Natural killer cell (primary cell): ENCODE measurements at regions of chr10 and their contacts with region 1.

Region 1: DNA sequence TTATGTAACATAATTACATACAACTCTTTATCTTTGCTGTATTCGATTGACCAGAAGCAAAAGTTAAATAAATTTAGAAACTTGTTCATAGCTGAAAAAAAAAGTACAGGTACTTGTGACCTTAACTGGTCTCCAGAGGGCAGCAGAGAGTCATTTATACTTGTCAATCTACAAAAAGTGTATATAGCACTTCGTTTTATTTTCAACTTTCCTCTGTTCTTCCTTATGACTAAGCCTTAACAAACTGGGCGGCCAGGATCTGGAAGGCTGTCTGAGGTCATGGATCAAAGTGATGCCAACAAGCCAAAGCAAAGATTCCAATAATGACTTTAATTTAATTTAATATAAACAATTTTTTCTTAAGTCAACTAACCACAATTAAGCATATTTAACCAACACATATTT is 29.8 kb downstream of the C10orf67 start:
- DNase-seq: peak in 1 of 2 donors; percentile 85
- ATAC-seq: peak in 2 of 3 donors; percentile 48 to 54
- H3K4me3 ChIP-seq: no peak overlapping the region
- H3K4me3 Mint-ChIP-seq: no peak overlapping the region
- H3K27ac ChIP-seq: no peak overlapping the region
- H3K27ac Mint-ChIP-seq: no peak overlapping the region
- H3K4me1 ChIP-seq: no peaks in the 10 kb centered on the region
- H3K4me1 Mint-ChIP-seq: no peaks in the 10 kb centered on the region
- H3K27me3 ChIP-seq: no peaks in the 10 kb centered on the region
- H3K27me3 Mint-ChIP-seq: peaks cover 0 to 13% of the 10 kb centered on the region in 2 donors
- CTCF ChIP-seq: peak; percentile 87

Region 2: DNA sequence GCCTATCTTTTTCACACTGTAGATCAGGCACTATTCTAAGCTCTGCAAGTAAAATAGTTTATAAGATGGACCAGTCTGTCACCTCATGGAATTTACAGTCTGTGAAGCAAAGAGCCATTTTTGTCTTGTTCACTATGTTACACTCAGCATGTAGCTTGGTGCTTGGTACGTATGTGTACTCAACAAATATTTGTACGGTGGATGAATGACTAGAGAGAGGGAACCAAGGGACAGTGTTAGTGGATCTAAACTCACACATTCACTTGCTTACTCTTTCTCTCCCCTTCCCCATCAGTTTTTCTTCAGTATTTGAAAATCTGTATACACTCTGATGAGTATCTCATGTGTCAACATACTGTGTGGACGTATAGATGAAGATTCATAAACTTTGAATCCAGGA is 76.8 kb before region 1 on chr10:
- intact Hi-C with region 1: no loop called
- DNase-seq: no peak
- ATAC-seq: peak in 1 of 3 donors; percentile 39
- H3K4me3 ChIP-seq: no peak overlapping the region
- H3K4me3 Mint-ChIP-seq: no peak overlapping the region
- H3K27ac ChIP-seq: no peak overlapping the region
- H3K27ac Mint-ChIP-seq: no peak overlapping the region
- H3K4me1 ChIP-seq: no peaks in the 10 kb centered on the region
- H3K4me1 Mint-ChIP-seq: no peaks in the 10 kb centered on the region
- H3K27me3 ChIP-seq: no peaks in the 10 kb centered on the region
- H3K27me3 Mint-ChIP-seq: peaks cover 0 to 3% of the 10 kb centered on the region in 2 donors
- CTCF ChIP-seq: no peak

Region 3: DNA sequence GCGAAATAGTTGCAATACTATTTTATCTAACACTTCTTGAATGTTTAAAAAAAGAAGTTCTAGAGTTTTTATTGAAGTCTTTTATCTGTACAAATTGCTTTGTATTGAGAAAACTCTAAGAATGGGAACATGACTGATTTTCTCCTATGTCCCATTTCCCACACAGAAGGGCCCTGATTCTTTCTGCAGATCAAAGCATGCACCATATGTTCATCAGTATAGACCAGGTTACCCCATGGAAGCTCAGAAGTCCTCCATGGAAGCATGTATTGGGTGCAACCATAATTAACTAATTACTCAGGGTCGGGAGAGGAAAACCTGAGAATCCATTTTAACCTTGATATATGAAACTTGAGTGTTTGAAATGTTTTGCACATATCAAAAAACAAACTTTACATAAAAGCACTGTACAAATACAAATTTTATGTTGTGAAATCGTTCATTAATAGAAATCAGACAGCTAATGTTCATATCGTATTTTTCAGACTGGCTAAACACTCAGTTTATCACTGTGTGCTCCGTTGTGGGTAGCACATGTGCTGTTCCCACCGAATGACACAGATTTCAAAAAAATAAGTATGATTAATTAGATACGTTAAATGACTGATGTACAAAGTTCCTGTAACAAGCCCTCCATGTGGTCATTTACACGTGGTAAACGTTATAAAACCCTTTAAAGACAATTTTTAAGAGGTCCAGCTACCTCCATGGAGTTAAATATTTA is 51.2 kb before region 1 on chr10:
- intact Hi-C with region 1: no loop called
- DNase-seq: no peak
- ATAC-seq: no peak
- H3K4me3 ChIP-seq: no peak overlapping the region
- H3K4me3 Mint-ChIP-seq: no peak overlapping the region
- H3K27ac ChIP-seq: no peak overlapping the region
- H3K27ac Mint-ChIP-seq: no peak overlapping the region
- H3K4me1 ChIP-seq: no peaks in the 10 kb centered on the region
- H3K4me1 Mint-ChIP-seq: no peaks in the 10 kb centered on the region
- H3K27me3 ChIP-seq: no peaks in the 10 kb centered on the region
- H3K27me3 Mint-ChIP-seq: no peaks in the 10 kb centered on the region
- CTCF ChIP-seq: no peak

Region 4: DNA sequence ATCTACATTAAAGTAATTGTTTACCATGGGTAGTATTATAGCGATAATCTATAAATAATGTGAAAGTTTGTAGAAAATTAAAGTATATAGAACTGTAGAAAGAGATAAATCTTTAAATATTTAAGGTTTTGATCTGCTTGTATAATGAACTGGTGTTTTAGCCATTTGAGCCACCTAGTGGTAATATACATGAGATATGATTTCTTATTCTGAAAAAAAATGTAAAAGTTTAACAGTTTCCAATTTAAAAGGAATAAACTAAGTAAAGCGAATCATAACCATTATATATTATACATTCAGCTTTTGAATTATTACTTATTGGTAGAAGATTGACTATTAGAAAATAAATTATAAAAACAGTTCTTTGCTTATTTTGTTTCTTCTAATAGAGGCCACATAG is 215.2 kb after region 1 on chr10:
- intact Hi-C with region 1: loop called (anchors 2 kb)
- DNase-seq: peak in 1 of 2 donors; percentile 30
- ATAC-seq: no peak
- H3K4me3 ChIP-seq: no peak overlapping the region
- H3K4me3 Mint-ChIP-seq: no peak overlapping the region
- H3K27ac ChIP-seq: no peak overlapping the region
- H3K27ac Mint-ChIP-seq: no peak overlapping the region
- H3K4me1 ChIP-seq: no peaks in the 10 kb centered on the region
- H3K4me1 Mint-ChIP-seq: no peaks in the 10 kb centered on the region
- H3K27me3 ChIP-seq: no peaks in the 10 kb centered on the region
- H3K27me3 Mint-ChIP-seq: peaks cover 0 to 6% of the 10 kb centered on the region in 2 donors
- CTCF ChIP-seq: no peak

Region 5: DNA sequence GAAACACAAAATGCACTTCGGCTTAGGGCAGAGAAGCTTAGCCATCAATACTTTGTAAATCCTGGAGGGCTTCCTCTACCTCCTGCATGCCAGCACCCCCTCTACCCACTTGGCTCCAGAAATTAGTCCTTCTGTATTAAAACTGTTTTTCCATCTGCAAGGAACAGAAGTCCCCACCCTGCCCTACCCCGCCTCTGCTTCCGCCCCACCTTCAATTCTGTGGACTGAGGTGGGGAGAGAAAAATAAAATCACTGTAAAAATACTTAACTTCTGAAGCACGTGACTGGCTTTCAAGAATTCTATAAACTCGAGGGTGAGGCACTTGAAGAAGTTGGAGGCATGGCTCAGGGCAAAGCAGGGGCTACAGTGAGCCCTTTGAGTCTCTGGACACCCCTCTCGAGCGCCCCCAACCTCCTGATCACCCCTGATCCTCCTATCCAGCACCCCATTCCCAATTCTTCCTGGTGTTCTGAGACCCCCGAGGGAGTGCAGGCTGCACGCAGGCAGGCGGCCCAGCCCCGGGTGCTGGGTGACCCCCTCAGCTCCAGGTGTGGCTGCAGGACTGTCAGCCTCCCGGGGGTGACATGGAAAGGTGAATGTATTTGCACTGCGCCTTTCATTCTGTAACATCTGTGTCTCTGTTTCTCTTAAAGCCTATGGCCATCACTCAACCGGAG is 886.8 kb after region 1 on chr10:
- intact Hi-C with region 1: loop called (anchors 1 kb)
- DNase-seq: no peak
- ATAC-seq: no peak
- H3K4me3 ChIP-seq: no peak overlapping the region
- H3K4me3 Mint-ChIP-seq: no peak overlapping the region
- H3K27ac ChIP-seq: no peak overlapping the region
- H3K27ac Mint-ChIP-seq: no peak overlapping the region
- H3K4me1 ChIP-seq: no peaks in the 10 kb centered on the region
- H3K4me1 Mint-ChIP-seq: no peaks in the 10 kb centered on the region
- H3K27me3 ChIP-seq: no peaks in the 10 kb centered on the region
- H3K27me3 Mint-ChIP-seq: no peaks in the 10 kb centered on the region
- CTCF ChIP-seq: no peak

Region 6: DNA sequence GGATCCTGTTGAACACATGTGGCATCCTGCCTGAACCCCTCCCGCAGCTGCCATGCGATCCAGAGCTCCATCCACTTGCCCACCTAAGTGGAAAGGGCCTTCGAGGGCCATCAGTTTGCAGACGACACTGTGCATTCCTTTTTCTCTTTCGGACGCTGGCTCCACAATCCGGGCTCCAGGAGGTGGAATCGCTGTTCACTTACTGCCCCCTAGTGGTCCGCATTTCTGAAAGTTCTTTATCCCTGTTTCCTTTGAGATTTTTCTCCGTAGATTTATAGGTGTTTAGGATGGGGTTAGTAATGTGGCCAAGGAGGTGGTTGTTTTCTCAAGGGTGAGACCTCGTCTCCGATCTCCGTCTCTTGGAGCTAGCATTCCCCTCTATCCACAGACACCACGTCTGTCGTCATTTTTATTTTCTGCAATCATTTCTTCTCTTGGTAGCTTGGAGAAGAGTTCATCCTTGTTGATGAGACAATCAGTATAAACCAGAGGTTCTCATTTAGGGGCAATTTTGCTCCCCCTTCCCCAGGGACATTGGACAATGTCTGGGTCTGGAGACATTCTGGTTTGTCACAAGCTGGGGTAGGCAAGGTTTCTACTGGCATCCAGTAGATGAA is 1204.3 kb after region 1 on chr10:
- intact Hi-C with region 1: loop called (anchors 2 kb)
- DNase-seq: peak in 1 of 2 donors; percentile 58
- ATAC-seq: no peak
- H3K4me3 ChIP-seq: no peak overlapping the region
- H3K4me3 Mint-ChIP-seq: no peak overlapping the region
- H3K27ac ChIP-seq: no peak overlapping the region
- H3K27ac Mint-ChIP-seq: no peak overlapping the region
- H3K4me1 ChIP-seq: peaks cover 6% of the 10 kb centered on the region
- H3K4me1 Mint-ChIP-seq: peaks cover 13 to 14% of the 10 kb centered on the region in 2 donors
- H3K27me3 ChIP-seq: no peaks in the 10 kb centered on the region
- H3K27me3 Mint-ChIP-seq: peaks cover 9 to 10% of the 10 kb centered on the region in 2 donors
- CTCF ChIP-seq: peak; percentile 45